ENCODE measurements at regions of chr5 and their contacts with region 1.

Region 1: GRCh38 chr5:78899922-78900362 is 85.2 kb downstream of the ARSB start:
- DNase-seq: peak; percentile 51
- H3K4me3 Mint-ChIP-seq: no peak overlapping the region
- H3K27ac Mint-ChIP-seq: no peak overlapping the region
- H3K4me1 Mint-ChIP-seq: no peaks in the 10 kb centered on the region
- H3K27me3 Mint-ChIP-seq: no peaks in the 10 kb centered on the region

Region 2: DNA sequence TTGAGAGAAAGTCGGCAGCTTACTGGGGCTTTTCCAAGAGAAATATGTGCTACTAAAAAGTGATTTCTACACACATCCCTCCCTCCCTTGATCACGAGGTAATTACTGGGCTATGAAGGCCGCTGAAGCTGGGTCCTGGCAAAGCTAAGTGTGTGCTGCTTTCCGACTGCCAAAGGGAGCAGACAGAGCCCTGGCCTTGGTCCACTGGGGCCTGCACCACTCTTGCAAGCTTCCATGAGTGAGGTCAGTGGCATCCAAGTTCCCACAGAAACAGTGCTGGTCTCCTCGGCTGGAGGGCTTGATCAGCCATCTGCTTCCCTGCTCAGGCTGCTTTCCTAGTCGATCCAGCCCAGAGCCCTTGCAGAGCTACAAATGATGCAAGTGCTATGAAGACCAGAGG is 96.6 kb before region 1 on chr5:
- CTCF ChIA-PET with region 1: no interaction called
- POLR2A ChIA-PET with region 1: no interaction called
- DNase-seq: no peak
- H3K4me3 Mint-ChIP-seq: no peak overlapping the region
- H3K27ac Mint-ChIP-seq: no peak overlapping the region
- H3K4me1 Mint-ChIP-seq: peaks cover 2% of the 10 kb centered on the region
- H3K27me3 Mint-ChIP-seq: no peaks in the 10 kb centered on the region

Region 3: GRCh38 chr5:78912085-78912771 is 12.3 kb after region 1 on chr5:
- CTCF ChIA-PET with region 1: interaction called, 17 read pairs
- POLR2A ChIA-PET with region 1: no interaction called
- DNase-seq: no peak
- H3K4me3 Mint-ChIP-seq: no peak overlapping the region
- H3K27ac Mint-ChIP-seq: no peak overlapping the region
- H3K4me1 Mint-ChIP-seq: peaks cover 3% of the 10 kb centered on the region
- H3K27me3 Mint-ChIP-seq: no peaks in the 10 kb centered on the region

Measured in activated CD4-positive, alpha-beta memory T cell treated with anti-CD3 and anti-CD28 coated beads, Interleukin-2, amount 10 ng/mL, durations not matched to agents 7 days and 5 days (primary cell).